ENCODE measurements at regions of chr10 and their contacts with region 1.

Region 1: DNA sequence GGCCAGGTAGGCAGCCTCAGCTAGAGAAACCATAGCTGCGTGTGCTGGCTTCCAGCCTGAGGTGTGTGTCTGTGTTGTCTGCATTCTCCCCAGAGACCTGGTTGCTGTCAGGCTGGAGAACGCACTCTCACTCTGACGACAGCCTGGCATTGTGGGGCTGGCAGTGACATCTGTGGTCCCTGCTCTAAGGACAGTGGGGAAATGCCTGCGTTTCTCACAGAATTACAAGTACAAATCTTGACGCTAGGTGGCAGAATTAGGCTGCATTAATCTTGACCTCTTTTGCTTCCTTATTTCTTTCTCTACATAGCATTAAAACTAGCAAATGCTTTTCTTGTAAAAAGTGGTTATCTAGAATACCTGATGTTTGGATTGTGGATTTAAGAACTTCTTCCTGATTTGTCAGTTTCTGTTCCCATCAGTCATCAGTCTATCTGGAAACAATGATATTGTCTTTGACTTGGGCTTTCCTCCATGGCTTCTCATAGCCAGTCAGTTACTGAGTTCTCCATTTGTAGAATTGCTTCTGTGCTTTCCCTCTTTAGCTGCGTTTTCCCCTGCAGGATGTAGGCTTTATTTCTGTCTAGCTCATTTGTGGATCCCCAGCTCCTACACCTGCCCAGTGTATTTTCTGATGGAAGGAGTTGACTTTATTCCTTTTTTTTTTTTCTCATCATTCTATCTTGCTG is 86.0 kb downstream of the FANK1 start:
- DNase-seq: peak in 4 of 14 experiments; percentile 23 to 71 (median 56)
- ATAC-seq: no peak
- H3K4me3 ChIP-seq: no peak overlapping the region
- H3K4me3 Mint-ChIP-seq: no peak overlapping the region
- H3K27ac ChIP-seq: no peak overlapping the region
- H3K27ac Mint-ChIP-seq: no peak overlapping the region
- H3K4me1 ChIP-seq: no peaks in the 10 kb centered on the region
- H3K4me1 Mint-ChIP-seq: no peaks in the 10 kb centered on the region
- H3K27me3 ChIP-seq: no peaks in the 10 kb centered on the region
- H3K27me3 Mint-ChIP-seq: peaks cover 13% of the 10 kb centered on the region
- CTCF ChIP-seq: peak; percentile 38

Region 2: DNA sequence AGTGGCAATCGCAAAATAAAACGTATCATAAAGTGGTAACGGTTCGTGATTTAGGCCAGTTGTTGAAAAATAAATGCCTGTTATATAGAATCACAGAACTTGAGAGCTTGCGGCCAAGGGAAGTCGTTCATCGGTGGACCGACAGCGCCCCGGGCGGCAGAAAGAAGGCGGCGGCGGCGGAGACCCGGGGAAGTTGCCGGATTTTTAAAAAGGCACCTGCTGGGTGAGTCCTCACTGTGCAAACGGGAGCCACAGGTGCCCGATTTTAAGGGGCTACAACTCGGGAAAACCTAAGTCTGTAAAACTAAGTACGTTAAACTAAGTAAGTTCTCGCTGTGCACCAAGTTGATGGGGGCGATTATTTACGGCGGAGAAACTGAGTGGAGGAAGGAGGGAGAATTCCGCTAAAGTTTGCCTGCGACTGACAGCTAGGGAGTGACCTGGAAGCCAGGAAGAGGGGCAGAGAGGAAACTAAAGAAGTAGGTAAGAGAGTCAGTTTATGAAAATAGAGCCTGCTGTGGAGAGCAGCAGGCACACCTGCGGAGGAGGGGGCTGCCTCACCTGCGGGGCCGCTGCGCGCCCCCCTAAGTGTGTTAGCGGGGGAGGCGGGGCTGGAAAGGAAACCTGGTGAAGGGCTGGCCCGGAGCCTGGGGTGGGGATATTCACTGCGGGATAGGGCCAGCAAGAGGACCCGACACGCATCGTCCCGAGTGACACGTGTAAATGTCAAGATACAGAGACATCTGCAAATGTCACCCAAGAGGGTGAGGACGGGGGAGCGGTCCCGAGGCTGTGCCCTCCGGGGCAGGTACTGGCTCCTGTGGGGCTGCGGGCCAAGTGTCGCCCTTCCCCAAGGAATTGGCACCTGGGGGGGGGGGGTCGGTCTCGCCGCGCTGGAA is 404.9 kb after region 1 on chr10:
- CTCF ChIA-PET with region 1: no interaction called
- POLR2A ChIA-PET with region 1: no interaction called
- intact Hi-C with region 1: loop called (anchors 5 kb)
- DNase-seq: peak in 12 of 14 experiments; percentile 1 to 55 (median 24)
- ATAC-seq: peak; percentile 48
- H3K4me3 ChIP-seq: peak overlapping the region; percentile 43
- H3K4me3 Mint-ChIP-seq: peak overlapping the region; percentile 87
- H3K27ac ChIP-seq: no peak overlapping the region
- H3K27ac Mint-ChIP-seq: peak overlapping the region; percentile 38
- H3K4me1 ChIP-seq: peaks cover 11% of the 10 kb centered on the region
- H3K4me1 Mint-ChIP-seq: no peaks in the 10 kb centered on the region
- H3K27me3 ChIP-seq: peaks cover 15 to 30% of the 10 kb centered on the region in 2 experiments
- H3K27me3 Mint-ChIP-seq: peaks cover 59% of the 10 kb centered on the region
- CTCF ChIP-seq: no peak

Region 3: GRCh38 chr10:126504063-126504739 is 521.8 kb after region 1 on chr10:
- CTCF ChIA-PET with region 1: no interaction called
- POLR2A ChIA-PET with region 1: no interaction called
- intact Hi-C with region 1: loop called in 1 of 2 experiments (anchors 2 kb)
- DNase-seq: peak in 3 of 14 experiments; percentile 24 to 51 (median 48)
- ATAC-seq: no peak
- H3K4me3 ChIP-seq: no peak overlapping the region
- H3K4me3 Mint-ChIP-seq: no peak overlapping the region
- H3K27ac ChIP-seq: no peak overlapping the region
- H3K27ac Mint-ChIP-seq: no peak overlapping the region
- H3K4me1 ChIP-seq: no peaks in the 10 kb centered on the region
- H3K4me1 Mint-ChIP-seq: no peaks in the 10 kb centered on the region
- H3K27me3 ChIP-seq: no peaks in the 10 kb centered on the region
- H3K27me3 Mint-ChIP-seq: no peaks in the 10 kb centered on the region
- CTCF ChIP-seq: peak; percentile 8

Region 4: GRCh38 chr10:126516515-126516914 is 534.1 kb after region 1 on chr10:
- CTCF ChIA-PET with region 1: no interaction called
- POLR2A ChIA-PET with region 1: no interaction called
- intact Hi-C with region 1: no loop called
- DNase-seq: no peak
- ATAC-seq: no peak
- H3K4me3 ChIP-seq: no peak overlapping the region
- H3K4me3 Mint-ChIP-seq: no peak overlapping the region
- H3K27ac ChIP-seq: no peak overlapping the region
- H3K27ac Mint-ChIP-seq: no peak overlapping the region
- H3K4me1 ChIP-seq: no peaks in the 10 kb centered on the region
- H3K4me1 Mint-ChIP-seq: no peaks in the 10 kb centered on the region
- H3K27me3 ChIP-seq: no peaks in the 10 kb centered on the region
- H3K27me3 Mint-ChIP-seq: no peaks in the 10 kb centered on the region
- CTCF ChIP-seq: no peak

Region 5: GRCh38 chr10:126749015-126749655 is 766.7 kb after region 1 on chr10:
- CTCF ChIA-PET with region 1: no interaction called
- POLR2A ChIA-PET with region 1: no interaction called
- intact Hi-C with region 1: loop called in 1 of 2 experiments (anchors 2 kb)
- DNase-seq: peak in 11 of 14 experiments; percentile 1 to 56 (median 9)
- ATAC-seq: no peak
- H3K4me3 ChIP-seq: no peak overlapping the region
- H3K4me3 Mint-ChIP-seq: no peak overlapping the region
- H3K27ac ChIP-seq: no peak overlapping the region
- H3K27ac Mint-ChIP-seq: no peak overlapping the region
- H3K4me1 ChIP-seq: no peaks in the 10 kb centered on the region
- H3K4me1 Mint-ChIP-seq: no peaks in the 10 kb centered on the region
- H3K27me3 ChIP-seq: no peaks in the 10 kb centered on the region
- H3K27me3 Mint-ChIP-seq: no peaks in the 10 kb centered on the region
- CTCF ChIP-seq: peak; percentile 19

Region 6: DNA sequence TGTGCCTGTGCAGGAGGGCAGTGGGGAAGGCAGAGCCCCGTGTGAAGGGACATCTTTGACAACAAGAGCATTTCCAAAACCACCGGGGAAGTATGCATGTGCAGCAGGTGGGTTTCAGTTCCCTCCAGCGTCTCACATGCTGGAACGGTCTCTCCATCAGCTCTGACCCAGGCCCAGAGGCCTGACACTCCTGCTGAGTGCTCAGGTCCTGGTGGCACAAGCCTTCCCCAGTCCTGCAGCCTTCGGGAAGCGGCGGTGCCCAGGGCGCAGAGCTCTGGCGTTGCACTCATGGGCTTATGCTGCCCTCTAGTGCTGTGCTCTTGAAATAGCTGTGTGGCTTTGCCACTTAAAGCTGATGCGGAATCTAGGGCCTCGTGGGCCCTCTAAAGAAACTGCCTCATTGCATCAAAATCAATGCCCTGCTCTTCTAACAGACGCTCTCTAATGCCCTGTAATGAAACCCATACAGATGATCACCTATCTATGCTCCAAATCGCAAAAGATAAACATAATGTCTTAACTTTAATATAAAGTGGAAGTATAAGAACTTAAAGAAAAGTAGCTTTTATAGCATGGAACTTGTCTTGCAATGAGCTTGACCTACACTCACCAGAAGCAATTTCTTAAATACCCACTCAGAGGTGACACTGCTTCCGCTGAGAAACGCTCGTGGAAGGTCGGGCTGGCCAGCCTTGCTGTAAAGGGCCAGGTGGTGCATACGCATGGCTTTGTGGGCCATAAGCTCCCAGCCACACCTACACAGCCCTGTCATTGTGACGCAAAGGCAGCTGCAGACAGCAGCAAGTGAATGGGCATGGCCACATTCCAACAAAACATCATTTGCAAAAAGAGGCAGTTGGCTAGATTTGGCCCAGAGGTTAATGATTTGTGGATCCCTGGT is 1871.7 kb after region 1 on chr10:
- CTCF ChIA-PET with region 1: interaction called, 3 read pairs
- POLR2A ChIA-PET with region 1: no interaction called
- intact Hi-C with region 1: loop called in 1 of 2 experiments (anchors 1 kb)
- DNase-seq: peak; percentile 23 to 69 (median 34)
- ATAC-seq: peak; percentile 52
- H3K4me3 ChIP-seq: no peak overlapping the region
- H3K4me3 Mint-ChIP-seq: no peak overlapping the region
- H3K27ac ChIP-seq: no peak overlapping the region
- H3K27ac Mint-ChIP-seq: no peak overlapping the region
- H3K4me1 ChIP-seq: peaks cover 4% of the 10 kb centered on the region
- H3K4me1 Mint-ChIP-seq: peaks cover 6% of the 10 kb centered on the region
- H3K27me3 ChIP-seq: peaks cover 0 to 5% of the 10 kb centered on the region in 2 experiments
- H3K27me3 Mint-ChIP-seq: peaks cover 5% of the 10 kb centered on the region
- CTCF ChIP-seq: peak; percentile 87

Measured in CD4-positive, alpha-beta T cell (primary cell).